ENCODE measurements at regions of chr12 and their contacts with region 1.

Region 1: GRCh38 chr12:19779393-19780056 is 340.2 kb downstream of the AEBP2 start:
- DNase-seq: peak; percentile 47
- ATAC-seq: peak; percentile 75
- H3K4me3 Mint-ChIP-seq: no peak overlapping the region
- H3K27ac Mint-ChIP-seq: no peak overlapping the region
- H3K4me1 Mint-ChIP-seq: peaks cover 28% of the 10 kb centered on the region
- H3K27me3 Mint-ChIP-seq: no peaks in the 10 kb centered on the region
- CTCF ChIP-seq: no peak

Region 2: GRCh38 chr12:19737019-19737418 is 42.5 kb before region 1 on chr12:
- CTCF ChIA-PET with region 1: no interaction called
- POLR2A ChIA-PET with region 1: no interaction called
- DNase-seq: no peak
- ATAC-seq: no peak
- H3K4me3 Mint-ChIP-seq: no peak overlapping the region
- H3K27ac Mint-ChIP-seq: no peak overlapping the region
- H3K4me1 Mint-ChIP-seq: no peaks in the 10 kb centered on the region
- H3K27me3 Mint-ChIP-seq: peaks cover 6% of the 10 kb centered on the region; the same call in 1 of the 2 replicates
- CTCF ChIP-seq: no peak

Region 3: DNA sequence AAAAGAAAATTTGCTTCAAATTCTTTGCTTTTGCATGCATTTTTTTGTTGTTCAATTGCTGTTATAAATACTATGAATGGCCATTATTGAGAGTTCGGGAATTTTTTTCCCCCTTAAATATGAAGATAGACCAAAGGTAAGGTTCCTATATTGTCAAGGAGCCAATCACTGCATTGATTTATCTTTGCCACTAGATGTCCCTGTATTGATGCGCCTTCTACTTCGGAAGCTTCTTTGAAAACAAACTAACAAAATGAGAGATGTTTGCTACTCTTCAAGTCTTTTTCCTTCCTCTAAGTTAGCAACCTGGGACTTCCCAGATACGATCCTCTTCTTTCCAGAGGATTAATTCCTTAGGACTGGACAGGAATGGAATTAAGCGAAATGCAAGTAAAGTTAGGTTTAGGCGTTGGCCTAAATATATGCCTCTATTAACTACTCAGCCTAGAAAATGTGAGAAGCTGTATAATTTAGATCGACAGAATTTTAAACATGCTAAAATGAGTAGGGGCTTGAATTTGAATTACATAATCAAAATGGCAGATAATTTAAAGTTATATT is 22.1 kb before region 1 on chr12:
- CTCF ChIA-PET with region 1: interaction called, 13 read pairs
- POLR2A ChIA-PET with region 1: no interaction called
- DNase-seq: no peak
- ATAC-seq: peak; percentile 75
- H3K4me3 Mint-ChIP-seq: no peak overlapping the region
- H3K27ac Mint-ChIP-seq: no peak overlapping the region
- H3K4me1 Mint-ChIP-seq: no peaks in the 10 kb centered on the region
- H3K27me3 Mint-ChIP-seq: no peaks in the 10 kb centered on the region
- CTCF ChIP-seq: no peak

Measured in WTC11 (cell line).